Caco-2 (cell line): ENCODE measurements at regions of chr7 and their contacts with region 1.

Region 1: GRCh38 chr7:36291387-36292316 is 98.0 kb upstream of the ANLN start:
- DNase-seq: peak; percentile 77 to 85
- H3K4me3 ChIP-seq: peak overlapping the region; percentile 24
- H3K4me3 Mint-ChIP-seq: peak overlapping the region; percentile 21
- H3K27ac Mint-ChIP-seq: peak overlapping the region; percentile 45
- H3K4me1 ChIP-seq: peaks cover 17% of the 10 kb centered on the region
- H3K4me1 Mint-ChIP-seq: peaks cover 21% of the 10 kb centered on the region
- H3K27me3 ChIP-seq: no peaks in the 10 kb centered on the region
- H3K27me3 Mint-ChIP-seq: no peaks in the 10 kb centered on the region
- CTCF ChIP-seq: peak; percentile 93 to 97

Region 2: DNA sequence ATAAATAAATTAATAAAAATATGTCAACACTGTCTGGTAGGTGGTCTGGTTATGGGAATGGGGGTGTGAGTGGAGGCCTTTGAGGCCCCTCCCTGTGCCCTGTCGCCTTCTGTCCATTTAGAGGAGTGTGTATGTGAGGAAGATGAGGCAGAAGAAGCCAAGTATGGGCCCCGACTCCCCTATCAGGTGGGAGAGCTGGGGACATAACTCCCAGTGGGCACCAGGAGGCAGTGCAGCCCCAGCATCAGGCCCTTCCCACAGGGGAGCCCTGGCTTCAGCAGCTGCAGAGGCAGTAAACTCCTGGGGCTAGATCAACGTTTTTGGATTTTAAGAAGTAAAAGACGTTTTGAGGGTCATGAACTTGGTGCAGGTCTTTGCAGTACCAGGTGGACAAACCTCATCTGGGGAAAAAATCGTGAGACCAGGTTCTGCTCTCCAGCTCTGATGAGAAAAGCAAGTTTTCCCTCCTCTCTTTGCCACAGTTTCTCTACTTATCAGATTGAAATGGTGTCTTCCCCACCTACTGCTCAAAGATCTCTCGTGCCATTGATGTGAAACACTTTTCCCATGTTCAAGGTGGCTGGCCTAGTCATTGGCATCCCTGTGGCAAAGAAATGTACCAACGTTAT is 306.4 kb before region 1 on chr7:
- CTCF ChIA-PET with region 1: interaction called, 17 read pairs
- POLR2A ChIA-PET with region 1: no interaction called
- intact Hi-C with region 1: loop called (anchors 1 kb)
- DNase-seq: peak; percentile 74 to 80
- H3K4me3 ChIP-seq: no peak overlapping the region
- H3K4me3 Mint-ChIP-seq: no peak overlapping the region
- H3K27ac Mint-ChIP-seq: no peak overlapping the region
- H3K4me1 ChIP-seq: no peaks in the 10 kb centered on the region
- H3K4me1 Mint-ChIP-seq: no peaks in the 10 kb centered on the region
- H3K27me3 ChIP-seq: no peaks in the 10 kb centered on the region
- H3K27me3 Mint-ChIP-seq: no peaks in the 10 kb centered on the region
- CTCF ChIP-seq: peak; percentile 87 to 92

Region 3: DNA sequence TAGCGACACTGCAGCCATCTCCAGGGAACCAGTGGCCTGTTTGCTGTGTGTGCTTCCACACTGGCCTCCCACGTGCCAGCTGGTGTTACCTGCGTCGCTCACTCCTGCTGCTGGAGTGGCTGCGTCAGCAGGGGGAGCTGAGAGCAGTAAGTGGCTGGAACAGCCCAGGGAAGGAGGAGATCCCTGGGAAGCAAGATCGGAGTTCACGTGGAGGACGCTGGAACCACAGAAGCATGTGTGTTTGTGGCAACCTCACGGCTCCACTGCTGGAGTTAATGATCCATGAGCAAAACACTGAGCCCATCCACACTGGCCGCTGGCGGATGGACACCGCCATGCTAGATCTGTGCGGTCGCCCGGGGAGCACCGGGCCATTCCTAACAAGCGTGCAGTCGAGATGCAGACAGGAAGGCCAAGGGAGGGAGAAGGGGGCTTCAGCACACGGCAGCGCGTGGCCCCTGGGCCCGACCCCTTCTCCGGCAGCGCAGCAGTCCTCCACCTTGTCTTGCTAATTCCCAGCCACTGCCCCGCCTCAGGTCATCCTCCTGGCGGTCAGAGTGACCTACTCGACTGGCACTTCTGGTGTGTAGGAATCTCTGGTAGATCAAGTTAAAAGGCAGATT is 207.1 kb before region 1 on chr7:
- CTCF ChIA-PET with region 1: no interaction called
- POLR2A ChIA-PET with region 1: no interaction called
- intact Hi-C with region 1: loop called (anchors 1 kb)
- DNase-seq: peak; percentile 69 to 74
- H3K4me3 ChIP-seq: no peak overlapping the region
- H3K4me3 Mint-ChIP-seq: no peak overlapping the region
- H3K27ac Mint-ChIP-seq: no peak overlapping the region
- H3K4me1 ChIP-seq: peaks cover 16% of the 10 kb centered on the region; the same call in 1 of the 2 replicates
- H3K4me1 Mint-ChIP-seq: peaks cover 8% of the 10 kb centered on the region
- H3K27me3 ChIP-seq: no peaks in the 10 kb centered on the region
- H3K27me3 Mint-ChIP-seq: no peaks in the 10 kb centered on the region
- CTCF ChIP-seq: peak; percentile 50 to 71

Region 4: DNA sequence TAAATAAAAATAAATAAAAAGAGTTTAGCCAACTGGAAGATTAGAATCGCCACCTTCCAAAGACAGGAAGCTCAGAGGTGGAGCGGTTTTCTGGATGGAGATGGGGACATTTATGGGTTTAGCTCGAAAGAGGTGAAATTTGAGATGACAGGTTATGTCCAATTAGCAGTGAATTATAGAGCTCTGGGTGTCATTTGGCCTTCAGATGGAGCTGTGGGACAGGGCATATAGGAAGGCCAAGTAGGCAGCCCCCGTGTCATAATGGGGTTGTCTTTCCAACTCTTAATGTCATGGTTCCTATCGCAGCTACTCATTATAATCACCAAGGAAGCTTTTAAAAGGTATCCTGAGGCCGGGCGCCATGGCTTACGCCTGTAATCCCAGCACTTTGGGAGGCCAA is 159.6 kb before region 1 on chr7:
- CTCF ChIA-PET with region 1: interaction called, 5 read pairs
- POLR2A ChIA-PET with region 1: no interaction called
- intact Hi-C with region 1: loop called (anchors 1 kb)
- DNase-seq: no peak
- H3K4me3 ChIP-seq: no peak overlapping the region
- H3K4me3 Mint-ChIP-seq: no peak overlapping the region
- H3K27ac Mint-ChIP-seq: no peak overlapping the region
- H3K4me1 ChIP-seq: no peaks in the 10 kb centered on the region
- H3K4me1 Mint-ChIP-seq: no peaks in the 10 kb centered on the region
- H3K27me3 ChIP-seq: no peaks in the 10 kb centered on the region; the same call in none of the 2 replicates
- H3K27me3 Mint-ChIP-seq: peaks cover 3% of the 10 kb centered on the region
- CTCF ChIP-seq: no peak

Region 5: DNA sequence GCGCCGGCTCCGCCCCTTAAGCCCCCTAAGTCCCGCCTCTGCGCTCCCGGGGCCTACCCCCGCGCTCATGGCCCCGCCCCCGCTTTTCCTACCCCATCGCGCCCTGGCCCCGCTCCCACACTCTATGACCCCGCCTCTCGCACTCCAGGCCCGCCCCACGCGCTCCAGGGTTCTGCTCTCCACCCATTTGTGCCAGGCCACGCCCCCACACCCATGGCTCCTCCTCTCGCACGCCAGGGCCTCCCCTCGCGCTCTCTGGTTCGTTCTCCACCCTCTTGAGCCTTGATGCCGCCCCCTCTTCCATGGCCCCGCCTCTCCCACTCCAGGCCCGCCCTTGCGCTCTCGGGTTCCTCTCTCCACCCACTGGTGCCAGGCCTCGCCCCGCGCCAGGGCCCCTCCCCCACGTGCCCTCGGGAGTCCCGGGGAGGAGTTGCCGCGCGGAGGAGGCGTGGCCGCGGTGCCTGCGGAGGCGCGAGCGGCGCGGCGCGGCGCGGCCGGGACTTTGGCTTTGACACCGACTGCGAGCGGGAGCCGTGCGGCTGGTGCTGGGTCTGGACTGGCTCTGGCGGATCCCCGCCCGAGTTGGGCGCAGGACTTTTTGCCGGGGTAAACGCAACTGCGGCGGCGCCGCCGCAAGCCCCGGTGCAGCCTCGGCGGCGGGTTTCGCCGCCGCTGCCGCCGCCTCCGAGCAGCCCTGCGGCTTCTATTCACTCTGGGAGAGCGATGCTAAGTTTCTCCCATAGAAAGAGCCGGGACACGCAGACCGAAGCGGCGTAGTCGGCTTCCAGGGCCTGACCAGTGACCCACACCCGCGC is 138.7 kb before region 1 on chr7 and contains the start of gene EEPD1:
- CTCF ChIA-PET with region 1: no interaction called
- POLR2A ChIA-PET with region 1: no interaction called
- intact Hi-C with region 1: loop called (anchors 1 kb)
- DNase-seq: peak; percentile 100
- H3K4me3 ChIP-seq: peak within 1 kb of the TSS; percentile 83
- H3K4me3 Mint-ChIP-seq: peak within 1 kb of the TSS; percentile 76
- H3K27ac Mint-ChIP-seq: peak within 1 kb of the TSS; percentile 63
- H3K4me1 ChIP-seq: peaks cover 9% of the 10 kb centered on the region; the same call in 1 of the 2 replicates
- H3K4me1 Mint-ChIP-seq: no peaks in the 10 kb centered on the region
- H3K27me3 ChIP-seq: no peaks in the 10 kb centered on the region
- H3K27me3 Mint-ChIP-seq: no peaks in the 10 kb centered on the region
- CTCF ChIP-seq: no peak
- total RNA-seq, gene EEPD1: 1.8 and 2.1 TPM in 2 replicates

Region 6: DNA sequence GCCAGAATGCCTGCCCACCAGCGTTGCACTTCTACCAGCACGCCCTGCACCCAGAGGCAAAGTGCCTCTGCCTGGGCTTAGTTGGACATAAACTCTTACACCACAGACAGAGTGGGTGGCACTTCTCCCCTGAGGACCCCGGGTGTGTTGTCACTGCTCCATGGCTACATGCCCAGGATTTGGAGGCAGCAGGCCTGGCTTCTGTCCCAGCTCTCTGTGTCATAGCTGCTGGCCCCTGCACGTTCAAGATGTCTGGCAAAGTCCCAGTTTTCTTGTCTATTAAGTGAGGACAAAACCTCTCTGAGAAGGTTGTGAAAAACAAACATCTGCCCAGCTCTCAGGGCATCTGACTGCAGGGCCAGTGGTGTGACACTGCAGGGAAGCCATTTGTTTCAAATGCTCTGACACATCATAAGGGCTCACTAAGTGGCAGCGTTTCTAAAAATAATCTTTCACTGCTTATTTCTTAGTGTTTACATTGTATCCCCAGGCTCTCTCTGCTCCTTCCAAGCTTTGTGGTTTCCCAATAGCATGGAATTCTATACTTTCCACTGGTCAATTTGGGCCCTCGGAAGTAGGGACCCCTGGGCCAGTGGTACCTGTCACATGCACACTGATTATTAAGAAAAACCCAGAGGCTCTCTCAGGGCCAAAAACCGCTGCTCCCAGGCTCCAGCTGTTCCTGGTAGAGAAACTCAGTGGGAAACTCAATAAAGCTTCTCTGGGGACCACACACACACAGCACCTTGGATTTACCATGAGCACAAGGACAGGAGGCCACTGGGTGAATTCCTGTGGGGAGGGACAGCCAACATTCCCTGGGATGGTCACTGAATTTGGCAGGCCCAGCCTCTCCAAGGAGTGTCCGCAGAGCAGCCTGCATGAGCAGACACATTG is 11.8 kb after region 1 on chr7:
- CTCF ChIA-PET with region 1: no interaction called
- POLR2A ChIA-PET with region 1: no interaction called
- intact Hi-C with region 1: no loop called
- DNase-seq: no peak
- H3K4me3 ChIP-seq: no peak overlapping the region
- H3K4me3 Mint-ChIP-seq: no peak overlapping the region
- H3K27ac Mint-ChIP-seq: no peak overlapping the region
- H3K4me1 ChIP-seq: no peaks in the 10 kb centered on the region
- H3K4me1 Mint-ChIP-seq: peaks cover 6% of the 10 kb centered on the region
- H3K27me3 ChIP-seq: no peaks in the 10 kb centered on the region
- H3K27me3 Mint-ChIP-seq: no peaks in the 10 kb centered on the region
- CTCF ChIP-seq: no peak

Region 7: DNA sequence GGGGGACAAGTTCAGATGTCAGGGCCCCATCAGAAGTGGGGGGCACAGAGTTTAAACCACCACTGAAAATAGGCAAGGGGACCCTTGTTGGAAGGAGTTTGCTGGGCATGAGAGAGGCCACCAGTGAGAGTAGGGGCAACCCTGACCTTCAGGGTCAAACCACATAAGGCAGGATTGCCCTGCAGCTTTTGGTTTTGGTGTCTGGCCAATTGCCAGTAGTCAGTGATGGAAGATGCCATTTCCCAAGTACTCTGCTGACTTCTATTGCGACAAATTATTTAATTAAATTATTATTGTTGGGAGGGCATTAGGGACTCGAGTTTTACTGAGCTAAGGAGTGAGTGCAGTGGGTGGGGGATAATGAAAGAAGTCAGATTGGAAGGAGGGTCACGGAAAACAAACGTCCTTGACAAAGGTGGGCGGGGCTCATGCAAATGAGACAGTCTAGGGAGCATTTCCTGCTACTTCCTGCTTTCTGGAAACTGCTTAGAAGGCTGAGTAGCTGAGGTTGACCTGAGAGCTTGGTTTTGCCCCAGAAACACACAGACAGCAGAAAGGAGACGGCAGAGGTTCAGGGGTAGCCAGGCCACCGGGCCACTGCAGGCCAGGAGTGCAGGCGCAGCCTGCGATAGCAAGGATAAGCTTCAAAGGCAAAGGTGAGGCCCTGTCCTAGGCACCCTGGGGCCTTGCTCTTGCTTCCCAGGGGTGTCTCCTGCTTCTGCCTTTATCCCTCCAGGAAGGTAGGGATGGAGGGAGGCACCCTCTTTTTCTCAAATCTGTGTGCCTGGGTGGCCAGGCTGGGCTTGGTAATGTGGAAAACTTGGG is 23.9 kb after region 1 on chr7:
- CTCF ChIA-PET with region 1: interaction called, 6 read pairs
- POLR2A ChIA-PET with region 1: no interaction called
- intact Hi-C with region 1: loop called (anchors 2 kb)
- DNase-seq: no peak
- H3K4me3 ChIP-seq: no peak overlapping the region
- H3K4me3 Mint-ChIP-seq: no peak overlapping the region
- H3K27ac Mint-ChIP-seq: no peak overlapping the region
- H3K4me1 ChIP-seq: no peaks in the 10 kb centered on the region
- H3K4me1 Mint-ChIP-seq: no peaks in the 10 kb centered on the region
- H3K27me3 ChIP-seq: no peaks in the 10 kb centered on the region; the same call in 1 of the 2 replicates
- H3K27me3 Mint-ChIP-seq: no peaks in the 10 kb centered on the region
- CTCF ChIP-seq: no peak